Mammary epithelial cell (primary cell): ENCODE measurements at regions of chr1 and their contacts with region 1.

Region 1: DNA sequence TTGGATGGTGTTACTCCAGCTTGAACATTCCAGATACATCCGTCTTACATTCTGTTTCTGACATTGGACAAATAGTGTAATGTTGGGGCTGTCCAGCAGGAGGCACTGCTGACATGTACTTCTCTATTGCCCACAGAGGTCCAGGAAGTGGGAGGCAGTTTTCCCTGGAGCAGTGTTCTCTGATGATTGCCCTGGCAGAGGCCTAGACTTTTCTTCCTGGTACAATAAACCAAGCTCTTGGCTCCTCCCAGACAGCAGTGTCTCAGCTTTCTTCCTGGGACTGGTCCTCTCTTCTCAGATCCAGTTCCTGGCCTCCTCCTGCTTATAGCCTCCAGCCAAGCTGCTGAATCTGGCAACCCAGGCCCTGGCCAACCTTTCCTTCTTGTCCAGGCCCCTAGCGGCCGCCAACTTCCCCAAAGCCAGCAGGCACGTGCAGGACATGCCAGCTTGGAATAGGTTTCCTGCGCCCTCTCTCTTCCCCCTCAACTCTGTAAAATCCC is 14.9 kb upstream of the IFNLR1 start:
- DNase-seq: peak; percentile 92
- H3K4me3 ChIP-seq: no peak overlapping the region
- H3K27ac ChIP-seq: peak overlapping the region; percentile 27
- H3K4me1 ChIP-seq: peaks cover 17% of the 10 kb centered on the region
- H3K27me3 ChIP-seq: no peaks in the 10 kb centered on the region
- CTCF ChIP-seq: peak; percentile 79 to 80

Region 2: DNA sequence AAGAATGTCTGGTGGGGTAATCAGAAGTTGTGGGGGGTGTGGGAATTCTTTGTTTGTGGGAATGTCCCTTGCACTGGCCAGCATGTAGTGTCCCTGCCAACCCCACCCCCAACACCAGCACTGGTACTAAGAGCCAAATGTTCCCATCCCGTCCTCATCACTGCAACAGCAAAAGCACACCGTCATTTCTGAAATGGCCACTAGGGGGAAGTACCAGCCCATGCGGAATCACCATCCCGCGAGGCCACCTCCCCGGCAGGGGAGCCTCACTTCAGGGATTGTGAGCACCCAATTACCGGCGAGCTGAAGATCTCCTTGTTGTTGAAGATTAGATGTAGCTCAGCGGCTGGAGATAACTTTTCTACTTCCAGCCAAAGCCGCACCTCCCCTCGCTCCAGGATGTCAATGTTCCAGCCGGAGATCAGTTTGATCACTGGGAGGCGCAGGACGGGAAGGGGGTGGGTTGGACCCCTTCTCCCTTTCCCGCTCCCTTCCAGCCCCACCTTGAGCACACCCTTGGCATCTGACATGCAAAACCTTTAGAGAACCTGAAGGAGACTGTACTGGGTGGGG is 131.1 kb before region 1 on chr1:
- CTCF ChIA-PET with region 1: no interaction called
- dilution Hi-C with region 1: no loop called
- in situ Hi-C with region 1: loop called in 1 of 2 experiments (anchors 5 kb)
- intact Hi-C with region 1: loop called (anchors 1 kb)
- DNase-seq: peak; percentile 75
- H3K4me3 ChIP-seq: no peak overlapping the region
- H3K27ac ChIP-seq: no peak overlapping the region
- H3K4me1 ChIP-seq: no peaks in the 10 kb centered on the region
- H3K27me3 ChIP-seq: no peaks in the 10 kb centered on the region
- CTCF ChIP-seq: peak; percentile 70 to 97

Region 3: DNA sequence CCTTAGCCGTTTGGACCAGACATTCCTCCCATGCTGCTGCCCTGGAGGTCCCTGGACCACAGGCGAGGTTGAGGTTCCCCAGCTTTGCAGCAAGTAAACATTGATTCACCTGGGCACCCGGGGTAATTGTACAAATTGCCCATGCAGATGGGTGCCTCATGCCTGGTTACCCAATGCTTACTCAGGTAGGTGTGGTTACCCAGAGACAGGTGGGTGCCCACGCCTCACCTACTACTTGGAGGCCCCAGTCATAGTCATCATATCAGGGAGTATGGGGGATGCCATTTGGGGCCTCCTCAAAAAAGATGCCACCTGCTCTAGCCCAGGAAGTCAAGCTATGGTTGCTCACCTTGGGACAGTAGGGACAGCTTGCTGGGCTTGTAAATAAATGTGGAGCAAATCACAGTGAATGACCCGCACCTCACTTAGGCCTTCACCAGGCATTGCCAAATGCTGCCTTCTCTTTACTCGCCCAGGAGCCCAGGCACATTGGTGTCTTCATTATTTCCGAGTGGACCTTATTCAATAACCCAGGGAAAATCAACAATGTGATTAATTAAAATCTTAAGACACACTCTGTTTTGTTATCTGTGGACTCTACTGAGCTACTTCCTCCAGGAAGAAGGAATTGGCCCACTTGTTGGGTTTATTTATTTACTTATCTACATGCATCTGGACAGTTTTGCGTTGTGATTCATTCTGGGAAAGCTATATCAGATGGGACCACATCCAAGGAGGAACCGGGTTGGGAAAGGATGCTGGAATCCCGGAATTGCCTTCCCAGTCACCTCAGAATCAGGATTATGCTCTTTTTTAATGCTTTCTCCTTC is 81.5 kb after region 1 on chr1:
- CTCF ChIA-PET with region 1: no interaction called
- dilution Hi-C with region 1: no loop called
- in situ Hi-C with region 1: no loop called
- intact Hi-C with region 1: loop called (anchors 1 kb)
- DNase-seq: peak; percentile 92
- H3K4me3 ChIP-seq: no peak overlapping the region
- H3K27ac ChIP-seq: peak overlapping the region; percentile 89
- H3K4me1 ChIP-seq: peaks cover 53% of the 10 kb centered on the region
- H3K27me3 ChIP-seq: no peaks in the 10 kb centered on the region
- CTCF ChIP-seq: no peak

Region 4: DNA sequence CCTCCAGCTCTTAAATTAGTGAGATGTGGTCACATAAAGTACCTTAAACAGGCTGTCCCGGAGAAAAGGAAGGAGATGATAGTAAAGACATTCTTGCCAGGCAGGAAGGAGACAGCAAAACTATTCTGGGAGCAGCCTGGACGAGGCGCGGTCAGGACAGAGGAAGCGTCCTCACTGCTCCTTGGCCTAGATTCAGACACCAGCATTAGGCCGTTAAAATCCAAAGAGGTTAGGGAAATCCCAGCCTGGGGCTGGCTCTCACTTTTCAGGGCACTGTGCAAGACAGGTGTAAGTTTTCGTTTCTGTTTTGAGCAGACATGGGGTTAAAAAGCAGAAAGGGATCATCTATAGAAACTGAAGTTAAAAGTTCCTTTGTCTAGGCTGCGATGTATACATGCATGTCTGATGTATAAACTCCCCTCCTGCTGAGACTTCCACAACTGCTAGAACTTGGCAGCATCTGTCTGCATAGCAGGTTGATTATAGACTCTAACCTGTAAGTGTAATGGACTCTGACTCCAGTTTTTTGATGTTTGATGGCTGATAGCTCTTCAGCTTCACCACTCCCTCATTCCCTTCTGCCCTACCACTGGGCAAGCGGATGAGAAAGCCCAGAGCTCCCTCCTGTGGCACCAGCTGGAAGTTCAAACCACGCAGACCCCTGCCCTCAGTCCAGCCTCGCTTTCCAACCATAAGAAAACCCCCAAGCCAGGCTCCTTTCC is 190.1 kb after region 1 on chr1:
- CTCF ChIA-PET with region 1: interaction called, 31 read pairs
- dilution Hi-C with region 1: loop called (anchors 5 kb)
- in situ Hi-C with region 1: loop called (anchors 5 kb)
- intact Hi-C with region 1: loop called (anchors 1 kb)
- DNase-seq: peak; percentile 50
- H3K4me3 ChIP-seq: peak overlapping the region in 2 of 3 experiments; percentile 14 to 24
- H3K27ac ChIP-seq: peak overlapping the region; percentile 76
- H3K4me1 ChIP-seq: peaks cover 28% of the 10 kb centered on the region
- H3K27me3 ChIP-seq: no peaks in the 10 kb centered on the region
- CTCF ChIP-seq: peak; percentile 87 to 90

Region 5: DNA sequence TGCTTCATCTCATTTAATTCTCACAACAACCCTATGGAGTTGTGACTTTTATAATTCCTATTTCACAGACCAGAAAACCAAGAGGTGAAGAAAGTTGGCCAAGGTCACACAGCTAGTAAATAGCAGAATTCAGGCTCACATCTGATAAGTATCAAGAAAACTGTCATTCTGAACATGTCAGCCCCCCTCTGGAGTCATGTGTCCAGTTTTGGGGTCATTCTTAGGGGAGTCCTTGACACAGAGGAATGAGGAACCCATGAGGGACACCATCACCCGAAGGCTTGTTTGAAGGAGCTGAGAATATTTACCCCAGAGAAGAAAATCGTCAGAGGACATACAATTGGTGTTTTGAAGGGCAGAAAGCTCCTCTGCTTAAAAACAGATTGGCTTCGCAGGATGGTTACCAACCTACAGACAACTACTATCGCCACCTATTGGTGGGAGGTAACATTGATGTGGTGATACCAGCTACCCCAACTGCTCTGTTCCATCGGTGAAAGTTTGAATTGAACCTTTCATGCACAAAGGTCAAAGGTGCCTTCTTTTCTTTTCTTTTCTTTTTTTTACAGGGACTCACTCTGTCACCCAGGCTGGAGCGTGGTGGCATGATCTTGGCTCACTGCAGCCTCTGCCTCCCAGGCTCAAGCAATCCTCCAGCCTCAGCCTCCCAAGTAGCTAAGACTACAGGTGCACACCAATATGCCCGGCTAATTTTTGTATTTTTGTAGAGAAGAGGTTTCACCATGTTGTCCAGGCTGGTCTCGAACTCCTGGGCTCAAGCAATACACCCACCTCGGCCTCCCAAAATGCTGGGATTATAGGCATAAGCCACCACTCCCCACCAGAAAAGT is 385.2 kb after region 1 on chr1:
- CTCF ChIA-PET with region 1: no interaction called
- dilution Hi-C with region 1: no loop called
- in situ Hi-C with region 1: no loop called
- intact Hi-C with region 1: loop called (anchors 5 kb)
- DNase-seq: peak; percentile 39
- H3K4me3 ChIP-seq: no peak overlapping the region
- H3K27ac ChIP-seq: no peak overlapping the region
- H3K4me1 ChIP-seq: peaks cover 12% of the 10 kb centered on the region
- H3K27me3 ChIP-seq: no peaks in the 10 kb centered on the region
- CTCF ChIP-seq: peak; percentile 81 to 85

Region 6: GRCh38 chr1:24830680-24831272 is 628.8 kb after region 1 on chr1:
- CTCF ChIA-PET with region 1: interaction called, 4 read pairs
- dilution Hi-C with region 1: no loop called
- in situ Hi-C with region 1: no loop called
- intact Hi-C with region 1: loop called (anchors 10 kb)
- DNase-seq: peak; percentile 55
- H3K4me3 ChIP-seq: no peak overlapping the region
- H3K27ac ChIP-seq: no peak overlapping the region
- H3K4me1 ChIP-seq: peaks cover 3% of the 10 kb centered on the region
- H3K27me3 ChIP-seq: no peaks in the 10 kb centered on the region
- CTCF ChIP-seq: peak; percentile 72 to 83